HCT116 (cell line): ENCODE measurements at regions of chr2 and their contacts with region 1.

Region 1: GRCh38 chr2:199979832-199980628 is 24.6 kb downstream of the MAIP1 start:
- DNase-seq: peak; percentile 57
- ATAC-seq: peak; percentile 79
- H3K4me3 ChIP-seq: no peak overlapping the region
- H3K27ac ChIP-seq: no peak overlapping the region
- H3K4me1 ChIP-seq: peaks cover 10 to 26% of the 10 kb centered on the region in 2 experiments
- H3K27me3 ChIP-seq: no peaks in the 10 kb centered on the region
- CTCF ChIP-seq: peak; percentile 76 to 95 (median 88)
- POLR2A ChIP-seq: no peak
- RAD21 ChIP-seq: peak; percentile 93

Region 2: DNA sequence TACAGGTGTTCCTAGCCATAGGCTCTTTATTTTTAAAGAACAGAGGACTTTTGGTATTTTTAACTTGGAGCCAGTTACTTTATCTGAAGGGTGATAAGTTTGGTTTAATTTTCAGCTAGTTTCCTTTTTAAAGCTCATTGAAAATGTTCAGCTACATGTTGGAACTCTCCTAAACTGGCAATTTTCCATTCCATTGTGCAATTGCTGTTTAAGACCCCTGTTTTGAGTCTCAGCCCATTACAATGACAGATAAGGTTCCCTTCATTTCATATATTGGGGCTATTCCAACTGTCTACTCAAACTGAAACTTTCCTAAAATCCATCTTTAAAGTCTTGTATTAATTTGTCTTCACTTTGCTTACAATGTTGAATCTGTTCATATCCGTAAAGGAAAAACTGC is 13.1 kb before region 1 on chr2:
- CTCF ChIA-PET with region 1: no interaction called
- POLR2A ChIA-PET with region 1: no interaction called
- RAD21 ChIA-PET with region 1: no interaction called
- intact Hi-C with region 1: no loop called
- DNase-seq: no peak
- ATAC-seq: no peak
- H3K4me3 ChIP-seq: no peak overlapping the region
- H3K27ac ChIP-seq: no peak overlapping the region
- H3K4me1 ChIP-seq: no peaks in the 10 kb centered on the region
- H3K27me3 ChIP-seq: no peaks in the 10 kb centered on the region
- CTCF ChIP-seq: no peak
- POLR2A ChIP-seq: no peak
- RAD21 ChIP-seq: no peak

Region 3: DNA sequence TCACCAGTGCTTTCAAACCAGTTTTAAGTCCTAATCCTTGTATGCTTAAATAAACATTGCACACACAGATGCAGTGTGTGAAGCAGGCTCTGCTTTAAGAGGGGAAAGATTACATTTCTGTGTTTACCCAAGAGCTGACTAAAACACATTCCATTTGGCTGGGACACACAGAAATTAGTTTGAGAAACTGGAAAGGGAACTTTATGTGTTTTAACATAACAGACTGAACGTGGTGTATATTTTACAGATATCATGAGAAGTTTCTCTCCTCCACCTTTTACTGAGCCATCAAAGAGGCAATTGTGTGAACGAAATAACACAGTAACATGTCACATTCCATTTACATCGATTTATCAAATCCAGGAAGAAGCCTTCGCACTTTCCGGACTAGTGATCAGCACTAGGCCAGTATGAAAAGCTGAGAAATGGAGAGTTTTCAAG is 97.2 kb after region 1 on chr2:
- CTCF ChIA-PET with region 1: no interaction called
- POLR2A ChIA-PET with region 1: no interaction called
- RAD21 ChIA-PET with region 1: no interaction called
- intact Hi-C with region 1: no loop called
- DNase-seq: no peak
- ATAC-seq: no peak
- H3K4me3 ChIP-seq: no peak overlapping the region
- H3K27ac ChIP-seq: no peak overlapping the region
- H3K4me1 ChIP-seq: no peaks in the 10 kb centered on the region
- H3K27me3 ChIP-seq: no peaks in the 10 kb centered on the region
- CTCF ChIP-seq: no peak
- POLR2A ChIP-seq: no peak
- RAD21 ChIP-seq: no peak

Region 4: GRCh38 chr2:200300648-200301314 is 320.8 kb after region 1 on chr2:
- CTCF ChIA-PET with region 1: no interaction called
- POLR2A ChIA-PET with region 1: no interaction called
- RAD21 ChIA-PET with region 1: no interaction called
- intact Hi-C with region 1: loop called (anchors 2 kb)
- DNase-seq: peak; percentile 68
- ATAC-seq: peak; percentile 67
- H3K4me3 ChIP-seq: peak overlapping the region in 1 of 2 experiments; percentile 28; a peak in 1 of 4 replicates
- H3K27ac ChIP-seq: peak overlapping the region; percentile 75; the same call in 1 of the 2 replicates
- H3K4me1 ChIP-seq: peaks cover 37 to 57% of the 10 kb centered on the region in 2 experiments
- H3K27me3 ChIP-seq: no peaks in the 10 kb centered on the region
- CTCF ChIP-seq: 0 out of 6 replicates have a peak, but pooled peaks of 2 of the 3 experiments have one; percentile 12 to 14
- POLR2A ChIP-seq: no peak
- RAD21 ChIP-seq: peak; percentile 11; the same call in 1 of the 2 replicates

Region 5: DNA sequence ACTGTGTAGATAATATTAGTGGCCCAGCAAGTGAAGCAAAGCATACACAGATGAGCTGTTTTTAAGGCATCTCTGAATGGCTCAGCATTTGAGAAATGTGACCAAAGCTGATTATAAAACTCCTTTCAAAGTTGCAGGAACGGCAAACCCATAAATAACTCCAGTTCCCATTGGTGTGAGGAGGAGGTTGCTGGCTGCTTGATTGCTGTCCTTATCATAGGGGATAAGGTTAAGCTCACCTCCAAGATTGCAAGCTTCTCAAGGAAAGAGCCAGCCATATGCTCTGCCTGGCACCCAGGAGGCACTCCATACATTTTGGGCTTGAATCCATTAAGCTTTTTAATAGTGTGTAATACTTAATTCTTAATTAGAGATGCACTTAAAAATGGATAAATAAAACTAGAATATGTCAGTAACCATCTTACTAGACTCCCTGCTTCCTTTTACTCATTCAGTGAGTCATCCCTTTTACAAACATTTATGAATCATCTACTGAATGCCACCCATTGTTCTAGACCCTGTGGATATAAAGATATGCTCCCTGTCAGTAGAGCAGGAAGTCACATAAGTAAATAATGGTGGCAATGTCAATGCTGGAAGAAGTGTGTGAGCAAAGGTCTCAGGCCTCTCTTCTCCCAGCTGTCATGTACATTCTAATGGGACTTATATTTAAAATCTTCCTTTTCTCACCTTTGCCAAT is 425.7 kb after region 1 on chr2:
- CTCF ChIA-PET with region 1: no interaction called
- POLR2A ChIA-PET with region 1: no interaction called
- RAD21 ChIA-PET with region 1: no interaction called
- intact Hi-C with region 1: loop called (anchors 2 kb)
- DNase-seq: peak; percentile 93
- ATAC-seq: peak; percentile 73
- H3K4me3 ChIP-seq: peak overlapping the region; percentile 19 to 42; a peak in 3 of 4 replicates
- H3K27ac ChIP-seq: peak overlapping the region; percentile 93
- H3K4me1 ChIP-seq: peaks cover 66 to 89% of the 10 kb centered on the region in 2 experiments
- H3K27me3 ChIP-seq: no peaks in the 10 kb centered on the region
- CTCF ChIP-seq: no peak
- POLR2A ChIP-seq: no peak
- RAD21 ChIP-seq: peak; percentile 26; the same call in 1 of the 2 replicates

Region 6: DNA sequence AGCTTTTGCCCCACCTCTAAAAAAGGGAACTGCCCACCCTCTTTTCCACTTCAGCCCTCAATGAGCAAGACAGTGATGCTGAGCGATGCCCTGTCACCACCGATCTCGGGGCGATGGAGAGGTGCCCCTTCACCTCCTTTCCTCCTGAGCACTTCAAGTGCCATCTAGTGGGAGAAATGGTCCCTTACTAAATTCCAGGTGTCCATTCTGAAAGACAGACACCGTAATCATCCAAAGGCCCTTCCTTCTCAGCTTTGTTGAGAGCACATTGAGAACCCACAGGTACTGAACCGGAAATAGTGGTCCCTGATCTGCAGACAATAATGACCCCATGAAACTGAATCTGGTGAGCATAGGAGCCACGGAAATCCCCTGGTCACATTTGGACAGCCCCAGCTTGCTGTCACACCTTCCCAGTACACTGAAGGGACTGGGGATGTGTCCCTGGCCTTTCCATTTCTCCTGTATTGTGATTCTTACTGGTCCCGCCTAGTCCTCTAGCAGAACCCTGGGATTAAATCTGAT is 491.4 kb after region 1 on chr2:
- CTCF ChIA-PET with region 1: interaction called, 9 read pairs
- POLR2A ChIA-PET with region 1: no interaction called
- RAD21 ChIA-PET with region 1: no interaction called
- intact Hi-C with region 1: loop called (anchors 1 kb)
- DNase-seq: peak; percentile 6
- ATAC-seq: peak; percentile 84
- H3K4me3 ChIP-seq: no peak overlapping the region
- H3K27ac ChIP-seq: no peak overlapping the region
- H3K4me1 ChIP-seq: no peaks in the 10 kb centered on the region
- H3K27me3 ChIP-seq: no peaks in the 10 kb centered on the region
- CTCF ChIP-seq: peak; percentile 62 to 72 (median 62); a peak in 5 of 6 replicates
- POLR2A ChIP-seq: no peak
- RAD21 ChIP-seq: peak; percentile 87

Region 7: DNA sequence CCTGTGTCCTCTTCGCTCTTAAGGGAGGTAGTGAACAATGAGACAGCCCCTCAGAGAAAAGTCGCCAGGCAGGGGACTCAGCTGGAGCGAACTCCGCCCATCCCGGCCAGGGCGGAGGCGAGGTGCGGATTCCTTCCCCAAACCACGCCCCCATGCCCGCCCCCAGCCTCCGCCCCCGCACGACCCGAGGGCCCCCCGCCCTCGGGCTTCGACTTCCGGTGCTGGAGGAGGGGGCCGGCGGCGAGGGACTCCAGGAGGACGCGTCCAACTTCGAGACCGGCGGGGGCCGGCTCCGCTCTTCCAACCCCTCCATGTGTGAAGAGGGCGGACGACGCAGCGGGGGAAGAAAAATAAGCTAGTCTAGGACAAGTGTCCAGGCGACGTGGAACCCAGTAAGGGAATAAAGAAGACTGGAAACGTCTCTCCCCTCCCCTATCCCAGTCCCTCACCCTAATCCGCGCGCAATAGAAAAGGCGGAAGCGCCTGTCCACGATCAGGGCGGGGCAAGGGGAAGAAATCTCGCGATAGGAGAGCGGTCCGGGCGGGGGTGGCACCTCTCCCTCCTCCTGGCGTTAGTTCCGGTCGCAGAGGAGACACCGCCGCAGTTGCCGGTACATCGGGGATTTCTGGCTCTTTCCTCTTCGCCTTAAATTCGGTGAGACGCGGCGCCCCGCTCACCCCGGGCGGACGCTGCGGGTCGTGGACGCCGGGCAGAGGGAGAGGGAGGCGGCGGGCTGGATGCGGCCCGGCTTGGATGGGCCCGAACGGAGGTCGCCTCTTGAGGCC is 831.5 kb after region 1 on chr2 and contains the start of gene BZW1:
- CTCF ChIA-PET with region 1: no interaction called
- POLR2A ChIA-PET with region 1: no interaction called
- RAD21 ChIA-PET with region 1: no interaction called
- intact Hi-C with region 1: loop called (anchors 5 kb)
- DNase-seq: peak; percentile 92
- ATAC-seq: peak; percentile 90
- H3K4me3 ChIP-seq: peak within 1 kb of the TSS; percentile 66 to 85
- H3K27ac ChIP-seq: peak within 1 kb of the TSS; percentile 96
- H3K4me1 ChIP-seq: peaks cover 12 to 26% of the 10 kb centered on the region in 2 experiments
- H3K27me3 ChIP-seq: no peaks in the 10 kb centered on the region
- CTCF ChIP-seq: no peak
- POLR2A ChIP-seq: peak; percentile 74
- RAD21 ChIP-seq: 0 out of 2 replicates have a peak, but pooled peaks have one; percentile 4
- total RNA-seq, gene BZW1: 454 TPM